ENCODE measurements at regions of chr6 and their contacts with region 1.

Region 1: GRCh38 chr6:34132486-34133185 is 13.3 kb downstream of the GRM4 start:
- DNase-seq: peak in 6 of 9 donors; percentile 23 to 50 (median 38)
- ATAC-seq: no peak
- H3K4me3 ChIP-seq: no peak overlapping the region
- H3K4me3 Mint-ChIP-seq: no peak overlapping the region
- H3K27ac ChIP-seq: no peak overlapping the region
- H3K27ac Mint-ChIP-seq: no peak overlapping the region
- H3K4me1 ChIP-seq: no peaks in the 10 kb centered on the region
- H3K4me1 Mint-ChIP-seq: peaks cover 0 to 6% (median 4%) of the 10 kb centered on the region in 7 donors
- H3K27me3 ChIP-seq: peaks cover 0 to 5% of the 10 kb centered on the region in 2 donors
- H3K27me3 Mint-ChIP-seq: peaks cover 27 to 64% (median 54%) of the 10 kb centered on the region in 5 donors

Region 2: GRCh38 chr6:34115403-34115795 is 17.2 kb before region 1 on chr6:
- CTCF ChIA-PET with region 1: interaction called, 3 read pairs
- POLR2A ChIA-PET with region 1: no interaction called
- intact Hi-C with region 1: loop called (anchors 1 kb)
- DNase-seq: peak in 5 of 9 donors; percentile 7 to 41 (median 31)
- ATAC-seq: no peak
- H3K4me3 ChIP-seq: no peak overlapping the region
- H3K4me3 Mint-ChIP-seq: no peak overlapping the region
- H3K27ac ChIP-seq: no peak overlapping the region
- H3K27ac Mint-ChIP-seq: no peak overlapping the region
- H3K4me1 ChIP-seq: no peaks in the 10 kb centered on the region
- H3K4me1 Mint-ChIP-seq: peaks cover 0 to 5% (median 0%) of the 10 kb centered on the region in 7 donors
- H3K27me3 ChIP-seq: no peaks in the 10 kb centered on the region
- H3K27me3 Mint-ChIP-seq: peaks cover 0 to 40% (median 29%) of the 10 kb centered on the region in 5 donors